Left ventricle myocardium inferior (tissue), 1 donor: ENCODE measurements at regions of chr4 and their contacts with region 1.

Region 1: DNA sequence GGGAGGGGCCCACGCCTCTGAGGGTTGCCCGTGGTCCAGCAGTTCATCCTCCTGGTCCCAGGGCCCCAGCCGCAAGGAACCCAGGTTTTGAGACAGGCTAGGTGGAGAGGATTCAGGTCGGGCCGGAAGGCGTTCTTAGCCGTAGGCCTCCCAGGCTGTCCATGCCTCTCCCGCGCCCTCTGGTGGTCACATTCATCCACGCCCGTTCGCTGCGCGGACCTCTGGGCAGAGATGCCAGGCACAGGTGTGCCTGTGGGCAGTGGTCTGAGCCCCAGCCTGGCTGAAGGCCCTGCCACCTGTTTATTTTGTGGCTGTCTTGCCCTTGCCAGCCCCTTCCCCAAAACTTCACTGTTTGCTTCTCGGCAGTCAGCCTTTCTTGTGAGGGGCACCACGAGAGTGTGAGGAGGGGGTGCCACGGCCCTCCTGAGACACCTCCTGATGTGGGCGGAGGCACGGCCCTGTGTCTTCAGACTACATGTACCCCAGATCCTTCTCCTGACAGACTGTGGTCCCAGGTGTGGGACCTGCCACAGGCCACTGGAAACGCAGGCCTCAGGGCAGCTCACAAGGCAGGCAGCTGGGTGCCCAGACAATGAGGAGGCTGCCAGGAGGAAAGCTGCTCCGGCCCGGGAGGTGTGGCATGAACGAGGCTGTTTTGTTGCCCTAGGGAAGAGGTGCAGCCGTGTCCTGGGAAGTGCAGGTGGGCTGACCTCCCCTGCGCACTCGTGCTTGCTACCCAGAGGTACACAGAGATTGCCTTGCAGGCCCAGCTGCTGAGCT is 5.0 kb downstream of the UVSSA start:
- DNase-seq: peak; percentile 80
- H3K4me3 ChIP-seq: no peak overlapping the region
- H3K27ac ChIP-seq: no peak overlapping the region
- H3K4me1 ChIP-seq: peaks cover 32% of the 10 kb centered on the region
- H3K27me3 ChIP-seq: no peaks in the 10 kb centered on the region
- CTCF ChIP-seq: peak; percentile 98

Region 2: DNA sequence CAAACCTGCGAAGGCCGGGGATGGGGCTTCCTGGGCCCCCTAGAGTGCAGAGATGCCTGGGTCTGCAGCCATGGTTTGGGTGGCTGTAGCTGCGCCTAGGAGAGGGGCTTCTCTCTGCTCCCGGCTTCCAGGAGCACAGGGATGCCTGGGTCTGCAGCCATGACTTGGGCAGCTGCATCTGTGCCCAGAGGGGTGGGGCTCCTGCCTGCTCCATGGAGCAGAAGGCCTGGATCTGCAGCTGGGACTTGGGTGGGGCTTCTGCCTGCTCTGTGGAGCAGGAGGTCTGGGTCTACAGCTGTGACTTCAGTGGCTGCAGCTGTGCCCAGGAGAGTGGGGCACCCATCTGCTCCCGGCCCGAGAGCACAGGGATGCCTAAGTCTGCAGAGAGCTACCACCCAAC is 200.5 kb before region 1 on chr4:
- intact Hi-C with region 1: no loop called
- DNase-seq: no peak
- H3K4me3 ChIP-seq: no peak overlapping the region
- H3K27ac ChIP-seq: no peak overlapping the region
- H3K4me1 ChIP-seq: peaks cover 11% of the 10 kb centered on the region
- H3K27me3 ChIP-seq: peaks cover 58% of the 10 kb centered on the region
- CTCF ChIP-seq: no peak

Region 3: GRCh38 chr4:1614854-1615634 is 263.0 kb after region 1 on chr4:
- intact Hi-C with region 1: no loop called
- DNase-seq: no peak
- H3K4me3 ChIP-seq: no peak overlapping the region
- H3K27ac ChIP-seq: no peak overlapping the region
- H3K4me1 ChIP-seq: peaks cover 8% of the 10 kb centered on the region
- H3K27me3 ChIP-seq: no peaks in the 10 kb centered on the region
- CTCF ChIP-seq: no peak

Region 4: DNA sequence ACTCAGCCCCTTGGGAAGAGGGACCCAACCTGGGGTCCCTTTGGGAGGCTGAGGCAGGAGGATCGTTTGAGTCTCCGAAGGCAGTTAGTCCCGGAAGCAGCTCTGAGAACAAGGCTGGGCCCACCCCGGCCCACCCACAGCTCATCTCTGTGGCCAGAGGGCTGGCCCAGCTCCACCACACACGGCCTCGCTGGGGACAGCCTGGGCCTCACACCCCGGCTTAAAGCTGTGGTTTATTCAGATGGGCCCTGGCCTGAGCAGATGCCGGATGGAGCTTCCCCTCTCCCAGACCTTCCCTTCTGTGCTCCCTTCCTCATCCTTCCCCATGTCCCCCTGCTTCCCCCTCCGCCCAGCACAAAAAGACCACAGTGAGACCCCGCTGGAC is 277.6 kb after region 1 on chr4:
- intact Hi-C with region 1: loop called (anchors 10 kb)
- DNase-seq: no peak
- H3K4me3 ChIP-seq: no peak overlapping the region
- H3K27ac ChIP-seq: no peak overlapping the region
- H3K4me1 ChIP-seq: peaks cover 9% of the 10 kb centered on the region
- H3K27me3 ChIP-seq: peaks cover 7% of the 10 kb centered on the region
- CTCF ChIP-seq: no peak

Region 5: DNA sequence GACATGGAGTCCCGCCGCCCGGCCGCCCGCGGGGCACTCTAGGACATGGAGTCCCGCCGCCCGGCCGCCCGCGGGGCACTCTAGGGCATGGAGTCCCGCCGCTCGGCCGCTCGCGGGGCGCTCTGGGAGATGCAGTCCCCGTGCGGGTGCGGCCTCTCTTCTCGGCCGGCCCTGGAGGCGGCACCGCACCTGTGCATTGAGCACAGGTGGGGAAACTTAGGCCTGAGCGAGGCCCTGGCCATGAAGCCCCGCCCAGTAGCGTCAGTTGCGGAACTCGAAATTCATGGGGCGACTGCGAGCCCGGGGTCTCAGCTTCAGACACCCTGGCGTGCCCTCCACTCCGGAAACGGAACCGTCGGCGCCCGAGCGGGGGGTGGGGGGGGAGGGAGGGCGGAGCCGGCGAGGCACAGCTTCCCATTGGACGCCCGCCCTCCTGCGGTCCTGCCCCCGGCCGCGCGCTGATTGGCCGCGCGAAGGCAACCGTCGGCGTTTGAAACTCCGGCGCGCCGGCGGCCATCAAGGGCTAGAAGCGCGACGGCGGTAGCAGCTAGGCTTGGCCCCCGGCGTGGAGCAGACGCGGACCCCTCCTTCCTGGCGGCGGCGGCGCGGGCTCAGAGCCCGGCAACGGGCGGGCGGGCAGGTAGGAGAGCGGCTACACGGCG is 369.1 kb after region 1 on chr4 and contains the starts of genes TACC3 and TMEM129:
- intact Hi-C with region 1: loop called (anchors 10 kb)
- DNase-seq: peak; percentile 93
- H3K4me3 ChIP-seq: peak within 1 kb of the TSS; percentile 81
- H3K27ac ChIP-seq: peak within 1 kb of the TSS; percentile 98
- H3K4me1 ChIP-seq: peaks cover 63% of the 10 kb centered on the region
- H3K27me3 ChIP-seq: no peaks in the 10 kb centered on the region
- CTCF ChIP-seq: no peak
- total RNA-seq, gene TACC3: 5.8 TPM
- total RNA-seq, gene TMEM129: 29.6 TPM

Region 6: GRCh38 chr4:1899149-1900086 is 547.4 kb after region 1 on chr4:
- intact Hi-C with region 1: no loop called
- DNase-seq: peak; percentile 56
- H3K4me3 ChIP-seq: no peak overlapping the region
- H3K27ac ChIP-seq: no peak overlapping the region
- H3K4me1 ChIP-seq: peaks cover 11% of the 10 kb centered on the region
- H3K27me3 ChIP-seq: no peaks in the 10 kb centered on the region
- CTCF ChIP-seq: peak; percentile 90

Region 7: DNA sequence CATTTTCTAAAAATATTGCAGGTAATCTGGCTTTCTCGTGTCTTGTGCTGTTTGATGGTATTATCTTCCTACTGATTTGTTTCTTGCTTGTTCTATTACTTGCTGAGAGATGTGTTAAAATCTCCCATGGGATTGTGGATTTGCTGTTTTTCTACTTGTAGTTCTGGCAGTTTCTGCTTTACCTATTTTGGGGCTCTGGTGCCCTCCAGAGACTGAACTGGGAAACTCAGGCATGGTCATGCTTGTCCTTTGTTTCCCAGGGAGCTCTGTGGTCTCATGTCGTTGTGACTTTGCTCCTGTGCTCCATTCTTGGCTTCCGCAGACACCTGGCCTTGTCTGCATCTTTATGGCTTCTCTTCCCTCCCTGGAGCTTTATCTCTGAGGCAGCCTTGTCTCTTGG is 558.6 kb after region 1 on chr4:
- intact Hi-C with region 1: no loop called
- DNase-seq: no peak
- H3K4me3 ChIP-seq: no peak overlapping the region
- H3K27ac ChIP-seq: no peak overlapping the region
- H3K4me1 ChIP-seq: no peaks in the 10 kb centered on the region
- H3K27me3 ChIP-seq: no peaks in the 10 kb centered on the region
- CTCF ChIP-seq: peak; percentile 58